ENCODE measurements at regions of chr2 and their contacts with region 1.

Region 1: DNA sequence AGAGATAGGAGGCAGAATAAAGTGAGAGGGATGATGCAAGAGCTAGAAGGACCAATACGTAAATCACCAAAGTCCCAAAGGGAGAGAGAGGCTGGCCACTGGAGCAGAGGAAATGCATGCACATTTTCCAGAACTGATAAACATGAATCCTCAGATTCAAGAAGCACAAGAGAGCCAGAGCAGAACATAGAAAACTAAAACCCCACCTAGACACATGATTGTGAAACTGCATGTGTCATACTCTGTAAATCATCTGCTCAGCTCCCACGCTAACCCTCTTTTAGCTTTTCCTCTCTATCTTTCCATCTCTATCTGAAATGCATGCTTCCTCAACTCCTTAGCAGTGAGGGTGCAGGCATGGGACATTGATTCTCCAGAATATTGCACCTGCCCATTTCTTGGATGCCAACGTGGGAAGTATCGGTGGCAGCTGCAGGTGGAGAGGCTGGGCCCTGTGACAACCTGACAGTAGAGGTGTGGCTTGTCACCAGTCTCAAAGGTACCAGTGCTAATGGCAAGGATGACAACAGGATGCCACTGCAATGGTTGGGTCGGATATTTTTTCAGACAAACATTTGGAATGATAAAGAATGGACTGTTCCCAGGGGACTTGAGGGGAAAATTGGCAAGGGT is 89.3 kb upstream of the OTOS start:
- DNase-seq: peak in 2 of 4 donors; percentile 26 to 49
- ATAC-seq: no peak
- H3K4me3 ChIP-seq: no peak overlapping the region
- H3K27ac ChIP-seq: no peak overlapping the region
- H3K4me1 ChIP-seq: peaks cover 26% of the 10 kb centered on the region
- H3K27me3 ChIP-seq: no peaks in the 10 kb centered on the region
- CTCF ChIP-seq: no peak
- POLR2A ChIP-seq: no peak

Region 2: DNA sequence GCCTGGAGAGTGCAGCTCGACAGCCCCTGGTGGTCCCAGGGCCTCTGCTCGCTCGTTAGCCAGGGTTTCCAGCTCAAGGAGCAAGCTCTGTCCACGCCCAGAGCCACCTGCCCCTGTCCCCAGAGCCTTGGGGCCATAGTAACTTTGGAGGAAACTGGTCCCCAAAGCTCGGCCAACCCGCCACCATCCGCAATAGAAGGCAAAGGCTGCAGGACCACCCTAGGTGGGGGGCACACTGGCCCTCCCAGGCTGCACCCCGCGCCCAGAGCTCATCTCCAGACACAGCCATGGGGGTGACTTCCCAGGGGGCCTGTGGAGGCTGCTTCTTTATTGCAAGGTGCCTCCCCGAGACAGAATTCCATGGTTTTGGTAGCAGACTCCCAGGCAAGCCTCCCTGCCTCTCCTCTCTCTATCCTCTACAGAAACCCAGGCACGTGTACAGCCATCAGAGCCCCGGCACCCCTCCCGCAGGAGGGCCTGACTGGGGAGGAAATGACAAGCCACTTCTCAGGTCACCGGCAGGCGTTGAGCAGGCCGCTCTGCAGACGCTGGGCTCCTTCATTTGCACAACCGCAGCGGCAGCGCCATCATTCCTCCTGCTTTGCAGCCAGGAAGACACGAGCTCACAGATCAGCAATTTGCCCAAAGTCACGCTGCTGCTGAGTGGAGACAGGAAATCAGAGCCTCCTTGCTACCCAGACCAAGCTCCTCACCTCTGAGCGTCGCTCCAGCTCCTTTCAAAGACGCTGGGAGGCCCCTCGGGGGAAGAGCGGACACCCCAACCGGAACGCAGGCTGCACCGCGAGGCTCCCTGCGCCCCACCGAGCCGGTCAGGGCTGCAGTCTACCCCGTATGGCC is 284.8 kb before region 1 on chr2:
- intact Hi-C with region 1: no loop called
- DNase-seq: peak in 2 of 4 donors; percentile 9 to 48
- ATAC-seq: no peak
- H3K4me3 ChIP-seq: no peak overlapping the region
- H3K27ac ChIP-seq: no peak overlapping the region
- H3K4me1 ChIP-seq: no peaks in the 10 kb centered on the region
- H3K27me3 ChIP-seq: no peaks in the 10 kb centered on the region
- CTCF ChIP-seq: no peak
- POLR2A ChIP-seq: no peak

Region 3: DNA sequence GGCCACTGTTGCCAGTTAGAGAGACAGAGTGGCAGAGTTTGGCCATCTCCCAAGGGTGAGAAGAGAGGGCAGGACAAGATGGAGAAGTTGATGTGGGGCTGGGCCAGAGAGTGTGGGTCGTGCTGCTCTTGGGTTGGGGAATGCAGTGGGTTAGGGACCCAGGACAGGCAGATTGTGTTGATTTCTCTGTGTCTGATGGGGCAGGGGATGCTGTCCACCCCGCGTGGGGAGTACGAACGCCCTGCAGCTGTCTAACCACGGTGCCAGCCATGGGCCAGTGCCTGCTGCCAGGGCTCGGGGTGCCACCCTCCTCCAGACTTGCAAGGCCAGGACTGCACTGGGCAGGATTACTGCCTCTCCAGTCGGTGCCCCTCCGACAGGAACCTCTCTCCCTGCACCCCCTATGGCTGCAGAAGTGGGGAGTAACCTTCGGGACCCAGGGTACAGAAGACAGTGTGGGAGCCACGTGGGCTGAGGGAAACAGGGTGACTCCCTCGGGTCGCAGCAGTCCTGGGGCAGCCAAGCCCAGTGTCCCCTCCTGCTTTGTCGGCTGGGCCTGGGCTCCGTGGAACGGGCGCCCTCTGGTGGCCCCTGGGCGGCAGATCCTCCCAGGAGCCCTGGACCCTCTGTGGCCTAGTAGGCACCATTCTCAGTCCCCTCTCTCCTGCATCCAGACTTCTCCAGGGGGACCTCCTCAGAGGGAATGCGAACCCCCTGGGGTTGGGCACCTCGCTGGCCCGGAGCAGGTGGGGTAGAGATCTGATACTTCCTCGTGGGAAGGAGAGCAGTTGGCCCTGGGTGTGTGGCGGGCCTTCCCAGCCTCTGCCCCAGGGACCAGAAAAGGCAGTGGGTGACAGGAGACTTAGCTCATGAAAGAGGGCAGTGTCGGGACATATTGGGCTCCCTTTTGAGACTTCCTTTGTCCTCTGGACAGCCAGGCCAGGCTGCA is 208.4 kb after region 1 on chr2:
- intact Hi-C with region 1: loop called (anchors 2 kb)
- DNase-seq: peak; percentile 69 to 81 (median 76)
- ATAC-seq: peak; percentile 29
- H3K4me3 ChIP-seq: no peak overlapping the region
- H3K27ac ChIP-seq: peak overlapping the region in 1 of 4 donors; percentile 32
- H3K4me1 ChIP-seq: peaks cover 40% of the 10 kb centered on the region
- H3K27me3 ChIP-seq: no peaks in the 10 kb centered on the region
- CTCF ChIP-seq: peak; percentile 91 to 95 (median 93)
- POLR2A ChIP-seq: no peak

Measured in body of pancreas (tissue), 4 donors.